ENCODE measurements at regions of chr17 and their contacts with region 1.

Region 1: DNA sequence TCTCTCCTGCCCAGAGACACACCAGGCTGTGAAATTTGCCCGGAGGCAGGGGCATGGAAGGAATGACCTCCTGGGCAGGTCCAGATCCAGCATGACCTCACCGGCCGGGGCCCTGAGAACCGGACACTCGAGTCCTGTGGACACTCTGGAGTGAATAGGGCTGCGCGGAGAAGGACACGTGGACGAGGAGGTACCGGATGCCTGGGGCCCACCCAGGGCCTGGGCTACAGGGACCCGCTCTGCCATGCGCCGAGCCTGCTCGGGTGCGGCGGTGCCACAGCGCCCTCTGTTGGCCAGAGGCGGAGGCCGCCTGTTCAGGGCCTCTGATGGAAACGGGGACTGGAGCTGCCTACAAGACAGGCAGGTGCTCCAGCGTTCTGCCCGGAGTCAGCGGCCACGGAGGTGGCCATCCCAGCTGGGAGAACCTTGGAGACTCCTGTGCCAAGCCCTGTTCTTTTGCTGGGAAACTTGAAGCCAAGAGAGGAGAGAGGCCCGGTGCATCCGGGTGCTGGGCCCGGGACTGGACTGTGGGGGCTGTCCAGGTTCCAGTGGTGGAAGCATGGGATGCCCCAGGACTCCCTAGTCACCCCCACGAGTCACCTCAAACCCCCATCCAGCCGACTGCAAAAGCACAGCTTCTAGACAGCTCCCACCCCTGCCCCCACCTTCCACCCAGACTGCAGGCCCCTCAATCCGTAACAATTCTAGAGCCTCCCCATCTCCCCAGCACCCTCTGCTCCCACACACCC is 19.3 kb upstream of the NXPH3 start:
- DNase-seq: peak in 1 of 2 donors; percentile 94
- H3K4me3 ChIP-seq: no peak overlapping the region
- CTCF ChIP-seq: peak in 1 of 3 donors; percentile 78
- POLR2A ChIP-seq: no peak

Region 2: DNA sequence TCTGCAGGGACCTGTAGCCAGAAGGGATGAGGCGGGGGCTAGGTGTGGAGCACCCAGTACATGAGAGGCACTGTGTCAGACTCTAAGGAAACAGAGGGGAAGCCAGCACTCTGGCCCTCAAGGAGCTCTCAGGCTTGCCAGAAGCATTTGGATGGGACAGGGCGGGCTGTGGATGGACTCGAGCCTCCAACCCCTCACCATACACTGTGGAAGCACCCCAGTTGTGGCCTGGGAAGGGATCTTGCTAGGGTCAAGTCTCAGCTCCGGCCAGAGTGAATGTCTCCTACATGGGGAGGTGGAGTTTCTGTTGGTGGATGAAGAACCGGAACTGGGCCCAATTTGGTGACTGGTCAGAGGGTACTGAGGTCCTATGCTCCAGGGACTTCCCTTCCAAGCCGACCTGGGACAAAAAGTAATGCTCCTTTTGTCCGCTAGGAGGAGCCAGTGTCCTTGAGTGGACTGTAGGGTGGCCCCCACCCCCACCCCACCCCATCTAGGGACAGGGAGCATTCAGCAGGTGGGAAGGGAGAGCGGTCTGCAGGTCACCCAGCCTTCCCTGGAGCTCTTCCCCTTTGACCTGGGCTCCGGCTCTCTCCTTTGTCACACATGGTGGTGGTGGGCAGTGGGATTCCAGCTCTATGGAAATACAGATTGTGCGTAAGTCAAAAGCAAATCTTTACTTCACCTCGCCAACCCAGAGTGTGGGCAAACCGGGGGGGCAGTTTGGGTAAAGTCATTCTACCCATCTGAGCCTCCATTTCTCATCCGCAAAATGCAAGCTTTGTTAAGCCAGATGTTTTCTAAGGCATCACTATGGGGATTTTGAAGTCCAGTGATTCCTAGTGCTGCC is 121.4 kb before region 1 on chr17:
- intact Hi-C with region 1: loop called (anchors 10 kb)
- DNase-seq: peak in 1 of 2 donors; percentile 84
- H3K4me3 ChIP-seq: no peak overlapping the region
- CTCF ChIP-seq: no peak
- POLR2A ChIP-seq: no peak